Heart left ventricle (tissue), 16 donors: ENCODE measurements at regions of chr4 and their contacts with region 1.

Region 1: GRCh38 chr4:47032415-47033106 is 1.2 kb downstream of the GABRB1 start:
- DNase-seq: peak; percentile 52 to 81 (median 77)
- ATAC-seq: peak; percentile 89 to 95 (median 94)
- H3K4me3 ChIP-seq: peak overlapping the region; percentile 11 to 64 (median 56)
- H3K27ac ChIP-seq: peak overlapping the region in 9 of 12 donors; percentile 39 to 81 (median 74)
- H3K4me1 ChIP-seq: peaks cover 0 to 16% (median 0%) of the 10 kb centered on the region in 12 donors
- H3K27me3 ChIP-seq: peaks cover 0 to 56% (median 5%) of the 10 kb centered on the region in 9 donors
- CTCF ChIP-seq: peak; percentile 43 to 78 (median 59)
- POLR2A ChIP-seq: no peak

Region 2: DNA sequence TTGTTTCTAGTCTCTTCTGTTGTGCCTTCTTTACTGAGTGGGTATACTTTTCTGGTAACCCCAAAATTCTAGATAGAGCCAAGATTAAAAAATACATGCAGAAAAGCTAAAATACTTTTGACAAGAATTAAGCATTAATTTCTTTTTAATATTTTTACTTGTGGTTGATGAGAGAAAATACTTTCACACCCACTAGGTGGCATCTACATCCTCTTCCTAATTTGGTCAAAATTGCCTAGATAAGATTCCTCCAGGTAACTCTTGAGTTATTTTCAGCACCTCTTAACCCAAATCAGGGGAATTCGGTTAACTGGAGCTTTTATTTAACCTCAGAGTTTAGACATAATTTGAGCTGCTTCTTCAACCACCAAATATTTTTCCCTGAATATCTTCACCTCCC is 95.1 kb before region 1 on chr4:
- intact Hi-C with region 1: loop called in 8 of 10 experiments (anchors 1 to 10 kb)
- DNase-seq: no peak
- ATAC-seq: no peak
- H3K4me3 ChIP-seq: no peak overlapping the region
- H3K27ac ChIP-seq: no peak overlapping the region
- H3K4me1 ChIP-seq: peaks cover 0 to 13% (median 0%) of the 10 kb centered on the region in 12 donors
- H3K27me3 ChIP-seq: no peaks in the 10 kb centered on the region
- CTCF ChIP-seq: peak in 4 of 12 donors; percentile 7 to 19 (median 13)
- POLR2A ChIP-seq: no peak

Region 3: DNA sequence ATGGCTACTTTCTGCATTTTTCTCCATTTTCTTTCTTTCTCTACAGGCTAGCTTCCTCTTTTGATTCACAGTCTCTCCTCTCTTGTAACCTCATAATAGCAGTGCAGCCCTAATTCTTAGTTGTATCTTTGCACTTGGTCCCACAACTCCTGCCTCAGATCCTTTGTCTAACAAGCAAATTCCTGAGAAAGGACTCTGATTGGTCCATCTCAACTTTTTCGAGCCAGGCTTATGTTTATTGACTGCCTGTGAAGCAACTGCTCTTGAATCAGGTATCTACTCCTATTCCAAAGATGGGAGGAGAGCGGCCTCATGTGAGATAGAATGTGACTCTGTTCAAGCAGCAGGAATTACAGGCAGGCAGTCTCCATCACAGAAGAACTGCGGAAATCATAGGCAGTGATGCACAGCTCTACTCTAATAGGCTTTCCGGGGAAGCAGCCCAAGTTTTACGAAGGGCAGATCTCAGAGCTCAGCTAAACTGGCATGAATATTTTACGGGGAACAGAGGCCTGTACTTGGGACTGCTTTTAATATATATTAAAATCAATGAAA is 122.3 kb after region 1 on chr4:
- intact Hi-C with region 1: no loop called
- DNase-seq: no peak
- ATAC-seq: no peak
- H3K4me3 ChIP-seq: no peak overlapping the region
- H3K27ac ChIP-seq: no peak overlapping the region
- H3K4me1 ChIP-seq: no peaks in the 10 kb centered on the region
- H3K27me3 ChIP-seq: no peaks in the 10 kb centered on the region
- CTCF ChIP-seq: no peak
- POLR2A ChIP-seq: no peak